HCT116 (cell line): ENCODE measurements at regions of chr6 and their contacts with region 1.

Region 1: DNA sequence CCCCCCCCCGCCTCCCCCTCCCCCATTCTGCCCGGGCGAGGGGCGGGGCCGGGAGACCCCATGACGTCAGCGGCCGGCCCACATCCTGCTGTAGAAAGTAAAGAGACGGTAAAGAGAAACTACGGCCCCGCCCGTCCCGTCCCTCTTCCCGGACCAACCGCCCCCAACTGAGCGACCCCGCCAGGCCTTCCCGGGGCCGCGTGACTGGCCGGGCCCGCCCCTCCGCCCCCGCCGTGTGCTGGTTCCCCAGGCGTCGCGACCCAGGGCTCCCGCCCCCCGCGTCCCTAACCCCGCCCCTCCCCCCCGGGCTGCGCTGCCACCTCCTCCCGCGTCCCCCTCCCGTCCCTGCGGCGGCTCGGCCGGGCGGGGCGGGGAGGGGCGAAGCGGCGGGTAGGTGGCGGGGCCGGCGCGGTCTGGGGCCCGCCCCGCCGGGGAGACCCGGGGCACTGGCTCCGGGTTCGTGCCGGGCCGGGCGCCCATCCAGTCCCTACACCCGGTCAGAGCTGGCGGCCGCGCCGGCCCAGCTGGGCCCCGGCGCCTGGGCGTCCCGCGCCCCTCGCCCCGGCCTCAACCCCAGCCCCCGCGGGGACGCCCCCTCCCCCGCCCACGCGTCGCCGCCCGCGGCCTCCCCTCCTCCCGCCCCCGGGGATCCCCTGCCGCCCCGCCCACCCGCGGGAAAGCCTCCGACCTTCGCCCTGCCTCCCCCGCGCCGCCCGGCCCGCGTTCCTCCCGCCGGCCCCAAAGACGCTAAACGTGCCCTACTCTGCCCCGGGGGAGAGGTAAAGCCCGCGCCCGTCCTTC is 636 bp upstream of the HIVEP1 start:
- DNase-seq: peak; percentile 91
- ATAC-seq: peak; percentile 80
- H3K4me3 ChIP-seq: peak overlapping the region; percentile 72 to 79
- H3K27ac ChIP-seq: peak overlapping the region; percentile 52
- H3K4me1 ChIP-seq: peaks cover 26 to 42% of the 10 kb centered on the region in 2 experiments
- H3K27me3 ChIP-seq: no peaks in the 10 kb centered on the region
- CTCF ChIP-seq: no peak
- POLR2A ChIP-seq: no peak
- RAD21 ChIP-seq: 0 out of 2 replicates have a peak, but pooled peaks have one; percentile 2

Region 2: DNA sequence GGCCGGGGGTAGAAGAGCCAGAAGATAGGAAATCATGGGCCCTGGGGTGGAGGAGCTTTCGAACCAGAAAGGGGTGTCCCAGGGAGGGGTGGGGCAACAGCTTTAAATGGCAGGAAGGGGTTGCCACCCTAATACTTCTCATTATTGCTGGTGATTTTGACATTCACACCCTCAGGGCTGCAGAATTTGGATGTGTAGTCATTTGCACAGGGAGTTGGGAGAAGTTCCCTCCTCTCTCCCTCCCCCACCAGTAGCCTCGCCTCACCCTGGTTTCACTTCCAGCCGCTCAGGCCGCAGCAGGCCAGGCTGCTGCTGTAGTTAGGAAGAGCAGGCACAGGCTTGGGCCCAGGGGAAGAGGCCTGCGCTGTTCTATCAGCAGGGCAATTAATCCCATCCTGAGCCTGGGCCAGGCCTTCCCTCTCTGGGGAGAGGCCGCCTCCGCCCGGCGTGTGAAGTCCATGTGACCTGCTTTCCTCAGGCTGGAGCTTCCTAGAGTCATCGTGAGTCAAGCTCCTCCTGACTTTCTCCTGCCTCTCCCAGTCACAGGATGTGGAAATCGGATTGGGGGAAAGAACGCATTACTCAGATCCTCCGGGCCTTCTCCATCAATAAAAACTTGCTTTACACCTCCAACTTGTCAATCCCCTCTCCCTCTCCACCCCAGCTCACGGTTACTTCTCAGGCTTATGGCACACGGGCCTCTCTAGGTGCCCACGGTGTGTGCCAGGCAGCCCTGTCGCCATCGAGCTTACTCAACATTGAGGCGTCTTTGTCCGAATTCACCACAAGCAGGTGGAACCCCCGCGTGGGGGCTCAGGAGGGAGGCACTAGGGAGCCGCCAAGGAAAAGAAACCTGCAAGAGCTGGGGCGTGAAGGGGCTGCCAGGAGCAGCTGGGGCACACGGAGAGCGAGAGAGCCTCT is 240.7 kb before region 1 on chr6:
- CTCF ChIA-PET with region 1: no interaction called
- POLR2A ChIA-PET with region 1: interaction called, 4 read pairs
- RAD21 ChIA-PET with region 1: no interaction called
- intact Hi-C with region 1: loop called (anchors 2 kb)
- DNase-seq: peak; percentile 89
- ATAC-seq: peak; percentile 79
- H3K4me3 ChIP-seq: peak overlapping the region; percentile 4 to 37; a peak in 1 of 4 replicates
- H3K27ac ChIP-seq: peak overlapping the region; percentile 49
- H3K4me1 ChIP-seq: peaks cover 40 to 68% of the 10 kb centered on the region in 2 experiments
- H3K27me3 ChIP-seq: no peaks in the 10 kb centered on the region
- CTCF ChIP-seq: no peak
- POLR2A ChIP-seq: no peak
- RAD21 ChIP-seq: peak; percentile 41

Region 3: GRCh38 chr6:11912426-11912825 is 99.0 kb before region 1 on chr6:
- CTCF ChIA-PET with region 1: no interaction called
- POLR2A ChIA-PET with region 1: no interaction called
- RAD21 ChIA-PET with region 1: no interaction called
- intact Hi-C with region 1: no loop called
- DNase-seq: no peak
- ATAC-seq: peak; percentile 27; the same call in 1 of the 2 replicates
- H3K4me3 ChIP-seq: no peak overlapping the region
- H3K27ac ChIP-seq: no peak overlapping the region
- H3K4me1 ChIP-seq: no peaks in the 10 kb centered on the region
- H3K27me3 ChIP-seq: no peaks in the 10 kb centered on the region
- CTCF ChIP-seq: peak; percentile 13 to 31 (median 30); a peak in 4 of 6 replicates
- POLR2A ChIP-seq: no peak
- RAD21 ChIP-seq: peak; percentile 58